PC-9 (cell line): ENCODE measurements at regions of chr10 and their contacts with region 1.

Region 1: GRCh38 chr10:32217216-32217615 is 129.7 kb downstream of the EPC1 start:
- DNase-seq: no peak
- H3K4me3 ChIP-seq: no peak overlapping the region
- H3K27ac ChIP-seq: no peak overlapping the region
- H3K4me1 ChIP-seq: no peaks in the 10 kb centered on the region
- H3K27me3 ChIP-seq: no peaks in the 10 kb centered on the region
- CTCF ChIP-seq: no peak

Region 2: GRCh38 chr10:32023264-32023663 is 194.0 kb before region 1 on chr10:
- CTCF ChIA-PET with region 1: interaction called, 11 read pairs
- POLR2A ChIA-PET with region 1: no interaction called
- intact Hi-C with region 1: no loop called
- DNase-seq: no peak
- H3K4me3 ChIP-seq: no peak overlapping the region
- H3K27ac ChIP-seq: no peak overlapping the region
- H3K4me1 ChIP-seq: no peaks in the 10 kb centered on the region
- H3K27me3 ChIP-seq: no peaks in the 10 kb centered on the region
- CTCF ChIP-seq: no peak